OCI-LY7 (cell line): ENCODE measurements at regions of chr6 and their contacts with region 1.

Region 1: DNA sequence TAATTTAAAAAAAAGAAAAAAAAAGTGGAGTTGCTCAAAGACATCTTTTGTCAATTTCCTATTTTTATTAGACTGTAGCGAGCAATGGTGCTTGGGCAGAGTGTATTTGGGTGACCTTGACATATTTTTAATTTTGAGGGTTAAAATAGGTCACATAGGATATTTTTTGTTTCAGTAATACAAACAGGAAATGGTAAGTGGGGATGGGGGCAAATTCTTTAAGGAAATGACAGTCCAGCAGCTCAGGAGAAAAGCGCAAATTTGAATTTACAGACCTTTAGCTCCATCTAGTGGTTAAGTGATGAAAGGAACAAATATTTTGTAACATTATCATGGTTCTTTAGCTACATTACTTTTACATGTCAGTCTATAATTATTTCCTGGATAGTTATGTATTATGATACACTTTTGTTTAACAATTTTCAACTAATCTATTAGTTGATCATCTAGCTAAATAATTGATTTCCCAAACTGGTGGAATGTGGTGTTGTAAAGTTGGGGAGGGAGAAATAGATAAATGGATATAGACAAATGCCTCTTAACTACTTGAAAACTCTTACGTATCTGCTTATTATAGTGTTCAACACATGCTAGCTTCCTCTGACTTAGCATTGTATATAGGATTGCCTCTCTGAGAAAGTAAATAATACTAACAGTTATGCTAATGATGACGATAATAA is 10.0 kb downstream of the CITED2 start:
- DNase-seq: peak; percentile 82
- H3K4me3 ChIP-seq: no peak overlapping the region
- H3K27ac ChIP-seq: peak overlapping the region; percentile 40
- H3K4me1 ChIP-seq: peaks cover 38% of the 10 kb centered on the region
- CTCF ChIP-seq: peak; percentile 92

Region 2: DNA sequence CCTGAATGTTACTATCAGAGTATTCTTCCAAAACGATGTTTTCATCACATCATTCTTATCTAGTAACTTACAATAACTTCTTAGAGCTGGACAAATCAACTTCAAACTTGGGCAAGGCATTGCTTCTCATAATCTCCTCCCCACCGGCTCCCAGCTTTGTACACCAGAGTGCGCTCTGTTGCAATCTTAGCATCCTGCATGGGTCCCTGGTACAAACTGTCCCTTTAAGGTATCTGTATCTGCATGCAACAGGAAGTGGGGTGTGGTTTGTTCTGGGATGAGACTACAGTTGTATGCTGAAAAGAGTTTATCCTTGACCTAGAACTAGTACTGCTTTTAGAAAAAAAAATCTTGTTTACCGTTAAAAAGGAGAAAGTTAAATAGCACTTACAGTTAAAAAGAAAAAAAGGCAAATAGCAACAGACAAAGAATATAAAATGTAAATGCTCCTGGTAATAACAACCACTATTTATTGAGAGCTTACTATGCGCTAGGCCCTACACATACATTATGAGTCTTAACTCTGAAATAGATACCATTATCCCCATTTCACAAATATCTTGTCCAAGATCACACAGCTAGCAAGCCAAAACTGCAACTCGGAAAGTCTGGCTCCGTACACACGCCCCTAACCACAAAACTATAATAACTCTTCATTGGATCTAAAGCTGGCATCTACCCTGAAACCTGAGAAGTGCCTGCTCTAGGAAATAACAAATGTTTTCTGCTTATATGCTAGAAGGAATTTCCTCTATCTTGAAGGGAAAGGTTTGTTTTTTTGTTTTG is 239.4 kb before region 1 on chr6:
- CTCF ChIA-PET with region 1: no interaction called
- POLR2A ChIA-PET with region 1: interaction called, 7 read pairs
- intact Hi-C with region 1: loop called (anchors 1 kb)
- DNase-seq: peak; percentile 92
- H3K4me3 ChIP-seq: peak overlapping the region; percentile 19
- H3K27ac ChIP-seq: peak overlapping the region; percentile 21
- H3K4me1 ChIP-seq: peaks cover 21% of the 10 kb centered on the region
- CTCF ChIP-seq: peak; percentile 98

Region 3: GRCh38 chr6:139230391-139230840 is 134.0 kb before region 1 on chr6:
- CTCF ChIA-PET with region 1: interaction called, 7 read pairs
- POLR2A ChIA-PET with region 1: interaction called, 5 read pairs
- intact Hi-C with region 1: loop called (anchors 1 kb)
- DNase-seq: peak; percentile 77
- H3K4me3 ChIP-seq: no peak overlapping the region
- H3K27ac ChIP-seq: peak overlapping the region; percentile 47
- H3K4me1 ChIP-seq: peaks cover 26% of the 10 kb centered on the region
- CTCF ChIP-seq: peak; percentile 74

Region 4: DNA sequence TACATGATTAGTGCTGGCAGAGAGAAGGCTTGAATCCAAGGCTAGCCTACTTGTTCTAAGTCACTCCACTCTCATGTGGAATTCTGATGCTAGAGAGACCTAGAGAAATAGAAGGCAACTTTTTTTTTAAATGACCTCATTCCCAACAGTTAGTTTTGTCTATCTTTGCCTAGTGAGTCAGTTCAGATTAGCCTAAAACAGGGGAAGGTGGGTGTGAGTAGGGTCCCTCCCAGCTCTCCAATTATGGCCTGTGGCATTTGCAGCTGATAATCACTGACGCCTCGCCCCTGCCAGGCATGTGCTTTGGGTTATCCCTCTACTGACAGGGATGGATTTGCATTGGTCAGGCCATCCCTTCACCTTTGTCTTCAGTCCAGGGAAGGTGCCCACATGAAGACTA is 86.3 kb before region 1 on chr6:
- CTCF ChIA-PET with region 1: no interaction called
- POLR2A ChIA-PET with region 1: interaction called, 4 read pairs
- intact Hi-C with region 1: loop called (anchors 2 kb)
- DNase-seq: no peak
- H3K4me3 ChIP-seq: no peak overlapping the region
- H3K27ac ChIP-seq: peak overlapping the region; percentile 89
- H3K4me1 ChIP-seq: peaks cover 89% of the 10 kb centered on the region
- CTCF ChIP-seq: no peak

Region 5: DNA sequence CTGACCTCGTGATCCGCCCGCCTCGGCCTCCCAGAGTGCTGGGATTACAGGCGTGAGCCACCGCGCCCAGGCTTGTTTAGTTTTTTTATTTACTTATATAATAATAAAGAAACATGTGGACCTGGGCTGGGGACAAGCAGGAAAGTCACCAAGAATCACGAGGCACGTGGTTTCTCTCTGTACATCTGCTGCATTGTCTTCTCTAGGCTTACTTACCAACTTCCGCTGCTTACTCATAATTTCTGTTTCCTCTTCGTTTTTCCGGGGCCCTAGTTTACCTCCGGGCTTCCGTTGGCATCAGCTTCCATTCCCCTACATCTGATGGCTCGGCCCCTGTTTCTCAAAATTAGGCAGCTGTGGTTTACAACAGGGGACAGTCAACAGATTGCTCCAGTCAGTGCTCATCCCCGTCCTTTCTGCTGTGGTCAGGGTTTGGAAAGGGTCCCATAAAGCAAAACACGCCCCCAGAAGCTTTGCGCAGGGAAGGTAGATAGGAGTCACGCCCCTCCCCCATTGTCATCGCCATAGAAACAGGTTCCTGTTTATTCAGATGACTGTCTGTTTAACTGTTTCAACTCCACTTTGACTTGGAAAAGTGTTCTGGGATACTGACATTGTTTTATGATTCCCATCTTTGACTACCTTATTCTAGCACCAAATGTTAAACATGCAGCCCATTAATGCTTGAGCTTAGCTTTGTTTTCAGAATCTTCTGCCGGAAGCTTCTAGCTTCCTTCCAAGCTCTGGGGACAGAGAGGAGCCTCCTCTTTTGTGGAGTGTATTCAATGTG is 40.7 kb before region 1 on chr6:
- CTCF ChIA-PET with region 1: no interaction called
- POLR2A ChIA-PET with region 1: interaction called, 7 read pairs
- intact Hi-C with region 1: loop called (anchors 5 kb)
- DNase-seq: peak; percentile 90
- H3K4me3 ChIP-seq: peak overlapping the region; percentile 61
- H3K27ac ChIP-seq: peak overlapping the region; percentile 97
- H3K4me1 ChIP-seq: peaks cover 78% of the 10 kb centered on the region
- CTCF ChIP-seq: no peak